OCI-LY7 (cell line): ENCODE measurements at regions of chr11 and their contacts with region 1.

Region 1: GRCh38 chr11:110376711-110377324 is 52.9 kb upstream of the FDX1 start:
- DNase-seq: peak; percentile 68
- H3K4me3 ChIP-seq: peak overlapping the region; percentile 31
- H3K27ac ChIP-seq: no peak overlapping the region
- H3K4me1 ChIP-seq: peaks cover 7% of the 10 kb centered on the region
- CTCF ChIP-seq: peak; percentile 96

Region 2: DNA sequence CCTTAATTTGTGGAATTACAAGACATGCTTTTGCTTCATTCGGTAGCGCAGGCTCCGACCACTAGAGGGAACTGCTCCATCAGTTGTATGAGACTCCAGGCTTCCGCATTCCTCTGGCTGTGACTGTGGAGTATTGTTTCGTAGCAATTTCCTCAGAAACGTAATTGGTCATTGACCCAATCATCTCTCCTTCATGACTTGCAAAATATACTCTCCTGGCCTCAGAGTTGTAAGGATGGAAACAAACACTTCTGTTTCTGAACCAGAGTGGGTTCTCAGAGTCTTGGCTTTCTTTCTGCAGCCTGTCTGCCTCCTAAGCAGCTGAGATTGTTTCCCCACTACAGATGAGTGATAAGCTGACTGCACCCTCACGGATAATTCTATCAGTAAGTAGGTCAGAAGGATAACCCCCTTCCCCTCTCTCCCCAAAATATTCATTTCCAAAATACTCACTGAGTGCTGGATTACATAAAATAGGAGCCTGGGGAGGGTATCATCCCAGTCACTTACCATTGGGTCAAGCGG is 430.4 kb before region 1 on chr11:
- CTCF ChIA-PET with region 1: no interaction called
- POLR2A ChIA-PET with region 1: no interaction called
- intact Hi-C with region 1: loop called (anchors 2 kb)
- DNase-seq: peak; percentile 87
- H3K4me3 ChIP-seq: peak overlapping the region; percentile 48
- H3K27ac ChIP-seq: no peak overlapping the region
- H3K4me1 ChIP-seq: peaks cover 9% of the 10 kb centered on the region
- CTCF ChIP-seq: peak; percentile 99

Region 3: GRCh38 chr11:110296226-110297075 is 80.4 kb before region 1 on chr11 and contains the start of gene RDX:
- CTCF ChIA-PET with region 1: no interaction called
- POLR2A ChIA-PET with region 1: no interaction called
- intact Hi-C with region 1: loop called (anchors 5 kb)
- DNase-seq: peak; percentile 80
- H3K4me3 ChIP-seq: peak within 1 kb of the TSS; percentile 92
- H3K27ac ChIP-seq: peak within 1 kb of the TSS; percentile 33
- H3K4me1 ChIP-seq: peaks cover 9% of the 10 kb centered on the region
- CTCF ChIP-seq: 0 out of 2 replicates have a peak, but pooled peaks have one; percentile 13
- total RNA-seq, gene RDX: 23.2 and 23.7 TPM in 2 replicates

Region 4: GRCh38 chr11:110409174-110409573 is 32.4 kb after region 1 on chr11:
- CTCF ChIA-PET with region 1: no interaction called
- POLR2A ChIA-PET with region 1: no interaction called
- intact Hi-C with region 1: no loop called
- DNase-seq: no peak
- H3K4me3 ChIP-seq: no peak overlapping the region
- H3K27ac ChIP-seq: no peak overlapping the region
- H3K4me1 ChIP-seq: no peaks in the 10 kb centered on the region
- CTCF ChIP-seq: no peak